GM10248 (cell line): ENCODE measurements at regions of chr2 and their contacts with region 1.

Region 1: DNA sequence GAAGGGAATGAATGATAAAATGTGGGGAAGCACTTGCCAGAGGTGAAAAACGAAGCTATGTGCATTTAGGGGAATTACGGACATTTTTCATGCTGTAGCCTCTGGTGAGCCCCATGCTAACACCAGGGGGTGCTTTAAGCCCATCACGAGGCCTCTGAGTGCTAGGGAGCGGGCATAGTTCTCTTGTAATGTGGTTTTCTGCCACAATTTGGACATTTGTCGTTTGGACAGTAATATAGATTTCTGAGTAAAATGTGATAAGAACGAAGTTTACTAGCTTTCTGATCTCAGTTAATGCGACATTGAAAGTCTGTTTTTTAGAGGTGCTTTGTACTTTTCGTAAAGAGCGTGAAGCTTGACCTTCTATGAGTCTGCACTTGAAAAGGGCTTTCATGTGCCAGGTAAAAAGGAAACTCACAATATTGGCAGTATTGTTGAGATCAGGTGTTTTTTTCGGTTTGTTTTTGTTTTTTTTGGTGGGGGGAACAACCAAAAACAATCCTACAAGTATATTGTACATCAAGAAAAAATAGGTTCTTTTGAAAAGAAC is 50.6 kb downstream of the TRAF3IP1 start:
- DNase-seq: peak; percentile 63
- CTCF ChIP-seq: peak; percentile 84

Region 2: DNA sequence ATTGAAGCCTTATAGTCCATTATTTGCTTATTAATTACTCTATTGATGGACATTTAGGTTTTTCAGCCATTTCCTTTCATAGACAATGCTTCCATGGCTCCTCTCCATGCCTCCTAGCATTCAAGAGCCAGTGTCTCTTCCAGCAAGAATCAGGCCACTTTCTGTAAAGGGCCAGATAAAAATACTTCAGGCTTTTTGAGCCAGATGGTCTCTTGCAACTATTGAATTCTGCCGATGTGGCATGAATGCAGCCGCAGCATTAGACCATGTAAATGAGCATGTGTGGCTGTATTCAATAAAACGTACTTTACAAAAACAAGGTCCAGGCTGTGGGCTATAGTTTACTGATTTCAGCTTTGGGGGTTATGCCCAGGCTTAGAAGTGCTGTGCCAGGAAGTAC is 12.1 kb before region 1 on chr2:
- CTCF ChIA-PET with region 1: interaction called, 10 read pairs
- POLR2A ChIA-PET with region 1: interaction called, 6 read pairs
- DNase-seq: no peak
- CTCF ChIP-seq: no peak

Region 3: GRCh38 chr2:238466243-238466756 is 95.4 kb after region 1 on chr2:
- CTCF ChIA-PET with region 1: interaction called, 10 read pairs
- POLR2A ChIA-PET with region 1: no interaction called
- DNase-seq: no peak
- CTCF ChIP-seq: no peak

Region 4: DNA sequence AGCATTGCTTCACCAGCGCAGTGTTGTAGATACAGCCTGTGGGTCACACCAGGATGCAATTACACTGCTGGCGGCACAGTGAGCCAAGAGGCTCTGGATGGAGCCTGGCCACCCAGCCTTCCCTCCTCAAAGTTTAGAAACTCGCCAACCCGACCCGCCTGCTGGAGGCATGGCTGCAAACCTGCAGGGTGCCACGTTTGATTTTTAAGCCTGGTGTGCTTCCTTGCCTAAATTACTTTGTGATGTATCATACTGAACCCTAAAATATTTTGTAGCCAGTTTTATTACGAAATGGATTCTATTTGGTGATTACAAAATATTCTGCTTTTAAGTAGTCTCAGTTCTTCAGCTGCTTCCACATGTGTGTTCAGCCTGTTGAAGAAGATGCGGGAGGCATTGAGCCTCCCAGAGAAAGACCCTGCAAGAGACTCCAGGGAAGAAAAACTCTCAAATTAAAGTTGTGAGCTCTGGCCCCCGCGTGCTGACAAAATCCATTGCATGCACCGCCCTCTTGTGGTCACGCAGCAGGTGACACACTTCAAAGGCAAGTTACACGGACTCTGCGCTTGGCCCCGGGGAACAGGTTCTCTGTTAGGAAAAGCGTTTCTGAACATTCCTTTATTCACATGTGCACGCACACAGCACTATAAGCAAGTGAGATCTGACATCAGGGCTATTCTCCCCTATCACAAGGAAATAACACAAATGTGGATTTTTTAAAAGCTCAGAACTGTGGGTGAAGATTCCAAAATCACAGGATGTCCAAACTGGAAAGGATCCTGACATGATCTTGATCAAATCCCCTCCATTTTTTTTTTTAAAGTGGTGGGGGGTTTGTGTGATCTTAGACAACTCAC is 414.0 kb after region 1 on chr2:
- CTCF ChIA-PET with region 1: interaction called, 21 read pairs
- POLR2A ChIA-PET with region 1: no interaction called
- DNase-seq: peak; percentile 75
- CTCF ChIP-seq: peak; percentile 79